WTC11 (cell line): ENCODE measurements at regions of chr6 and their contacts with region 1.

Region 1: GRCh38 chr6:32108094-32108627 is 977 bp downstream of the TNXB start:
- DNase-seq: no peak
- ATAC-seq: peak; percentile 18
- H3K4me3 Mint-ChIP-seq: peak overlapping the region; percentile 14
- H3K27ac Mint-ChIP-seq: no peak overlapping the region
- H3K4me1 Mint-ChIP-seq: peaks cover 20% of the 10 kb centered on the region
- H3K27me3 Mint-ChIP-seq: peaks cover 26% of the 10 kb centered on the region
- CTCF ChIP-seq: no peak

Region 2: GRCh38 chr6:32064706-32065105 is 43.5 kb before region 1 on chr6:
- CTCF ChIA-PET with region 1: no interaction called
- POLR2A ChIA-PET with region 1: no interaction called
- DNase-seq: no peak
- ATAC-seq: no peak
- H3K4me3 Mint-ChIP-seq: no peak overlapping the region
- H3K27ac Mint-ChIP-seq: no peak overlapping the region
- H3K4me1 Mint-ChIP-seq: peaks cover 3% of the 10 kb centered on the region
- H3K27me3 Mint-ChIP-seq: no peaks in the 10 kb centered on the region
- CTCF ChIP-seq: no peak

Region 3: GRCh38 chr6:32096394-32097258 is 11.5 kb before region 1 on chr6:
- CTCF ChIA-PET with region 1: interaction called, 10 read pairs
- POLR2A ChIA-PET with region 1: no interaction called
- DNase-seq: no peak
- ATAC-seq: peak; percentile 76
- H3K4me3 Mint-ChIP-seq: no peak overlapping the region
- H3K27ac Mint-ChIP-seq: no peak overlapping the region
- H3K4me1 Mint-ChIP-seq: no peaks in the 10 kb centered on the region
- H3K27me3 Mint-ChIP-seq: peaks cover 2% of the 10 kb centered on the region; the same call in 1 of the 2 replicates
- CTCF ChIP-seq: no peak